A549 (cell line): ENCODE measurements at regions of chr7 and their contacts with region 1.

Region 1: GRCh38 chr7:34165929-34166550 is 260.7 kb downstream of the BMPER start:
- DNase-seq: peak; percentile 30 to 37
- ATAC-seq: peak; percentile 54 to 86; a peak in 5 of 6 replicates
- H3K4me3 ChIP-seq: no peak overlapping the region
- H3K27ac ChIP-seq: peak overlapping the region; percentile 6 to 67; a peak in 4 of 6 replicates
- H3K4me1 ChIP-seq: no peaks in the 10 kb centered on the region
- CTCF ChIP-seq: peak; percentile 66
- EP300 ChIP-seq: no peak
- POLR2A ChIP-seq: no peak
- RAD21 ChIP-seq: peak; percentile 65 to 70

Region 2: GRCh38 chr7:34155220-34155908 is 10.7 kb before region 1 on chr7:
- CTCF ChIA-PET with region 1: interaction called, 14 read pairs
- POLR2A ChIA-PET with region 1: no interaction called
- DNase-seq: peak; percentile 24 to 56
- ATAC-seq: peak; percentile 68 to 80
- H3K4me3 ChIP-seq: no peak overlapping the region
- H3K27ac ChIP-seq: peak overlapping the region; percentile 35 to 65; a peak in 4 of 6 replicates
- H3K4me1 ChIP-seq: peaks cover 10% of the 10 kb centered on the region; the same call in 2 of the 3 replicates
- CTCF ChIP-seq: no peak
- EP300 ChIP-seq: peak in 1 of 2 experiments; percentile 48; a peak in 2 of 5 replicates
- POLR2A ChIP-seq: no peak
- RAD21 ChIP-seq: no peak

Region 3: DNA sequence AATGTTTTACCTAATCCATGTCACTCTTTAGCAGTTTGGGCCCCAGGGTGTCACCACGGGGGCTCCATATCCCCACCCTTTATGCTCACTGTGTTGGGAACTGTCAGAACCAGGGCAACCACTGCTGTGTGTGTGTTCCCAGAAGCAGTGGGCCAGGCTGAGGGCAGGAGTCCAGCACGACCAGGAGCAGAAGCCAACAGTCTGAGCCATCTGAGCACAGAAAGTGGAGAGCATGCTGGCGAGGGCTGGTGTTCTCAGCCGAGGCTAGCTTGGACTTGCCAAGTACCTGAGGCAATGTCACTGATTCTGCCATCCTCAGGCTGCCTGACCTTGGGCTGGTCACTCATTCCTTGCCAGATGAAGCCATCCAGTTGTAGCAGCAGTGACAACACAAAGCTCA is 24.3 kb after region 1 on chr7:
- CTCF ChIA-PET with region 1: no interaction called
- POLR2A ChIA-PET with region 1: no interaction called
- DNase-seq: no peak
- ATAC-seq: no peak
- H3K4me3 ChIP-seq: no peak overlapping the region
- H3K27ac ChIP-seq: no peak overlapping the region
- H3K4me1 ChIP-seq: no peaks in the 10 kb centered on the region
- CTCF ChIP-seq: no peak
- EP300 ChIP-seq: no peak
- POLR2A ChIP-seq: no peak
- RAD21 ChIP-seq: no peak

Region 4: GRCh38 chr7:34373940-34374339 is 207.9 kb after region 1 on chr7:
- CTCF ChIA-PET with region 1: no interaction called
- POLR2A ChIA-PET with region 1: no interaction called
- DNase-seq: no peak
- ATAC-seq: no peak
- H3K4me3 ChIP-seq: no peak overlapping the region
- H3K27ac ChIP-seq: no peak overlapping the region
- H3K4me1 ChIP-seq: no peaks in the 10 kb centered on the region
- CTCF ChIP-seq: no peak
- EP300 ChIP-seq: no peak
- POLR2A ChIP-seq: no peak
- RAD21 ChIP-seq: no peak